K562 (cell line): ENCODE measurements at regions of chr3 and their contacts with region 1.

Region 1: DNA sequence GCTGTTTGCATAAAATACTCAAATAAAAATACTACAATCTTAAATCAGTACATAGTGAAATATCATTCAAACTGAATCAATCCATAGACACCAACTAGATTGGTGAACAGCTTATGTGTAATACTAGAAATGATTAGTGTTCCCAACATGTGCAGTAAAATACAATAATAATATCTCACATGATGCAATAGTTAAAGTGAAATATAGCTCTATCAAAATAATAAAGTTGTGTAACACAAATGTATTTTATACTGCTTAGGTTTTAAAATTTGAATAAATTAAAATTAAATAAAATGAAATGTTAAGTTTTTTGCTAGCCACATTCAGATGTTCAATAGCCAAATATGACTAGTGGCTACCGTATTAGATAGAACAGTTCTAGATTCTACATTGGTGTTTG is 714.1 kb downstream of the ZNF385D start:
- DNase-seq: no peak
- ATAC-seq: no peak
- H3K4me3 ChIP-seq: no peak overlapping the region
- H3K27ac ChIP-seq: no peak overlapping the region
- H3K4me1 ChIP-seq: no peaks in the 10 kb centered on the region
- H3K27me3 ChIP-seq: no peaks in the 10 kb centered on the region
- CTCF ChIP-seq: no peak
- EP300 ChIP-seq: no peak
- POLR2A ChIP-seq: no peak
- RAD21 ChIP-seq: no peak

Region 2: GRCh38 chr3:19632099-19633074 is 1404.5 kb before region 1 on chr3:
- CTCF ChIA-PET with region 1: no interaction called
- POLR2A ChIA-PET with region 1: no interaction called
- in situ Hi-C with region 1: no loop called
- intact Hi-C with region 1: no loop called
- DNase-seq: no peak
- ATAC-seq: no peak
- H3K4me3 ChIP-seq: no peak overlapping the region
- H3K27ac ChIP-seq: no peak overlapping the region
- H3K4me1 ChIP-seq: no peaks in the 10 kb centered on the region
- H3K27me3 ChIP-seq: no peaks in the 10 kb centered on the region
- CTCF ChIP-seq: no peak
- EP300 ChIP-seq: no peak
- POLR2A ChIP-seq: no peak
- RAD21 ChIP-seq: no peak

Region 3: GRCh38 chr3:21020681-21021080 is 16.2 kb before region 1 on chr3:
- CTCF ChIA-PET with region 1: no interaction called
- POLR2A ChIA-PET with region 1: no interaction called
- in situ Hi-C with region 1: no loop called
- intact Hi-C with region 1: no loop called
- DNase-seq: no peak
- ATAC-seq: no peak
- H3K4me3 ChIP-seq: no peak overlapping the region
- H3K27ac ChIP-seq: no peak overlapping the region
- H3K4me1 ChIP-seq: no peaks in the 10 kb centered on the region
- H3K27me3 ChIP-seq: no peaks in the 10 kb centered on the region
- CTCF ChIP-seq: no peak
- EP300 ChIP-seq: no peak
- POLR2A ChIP-seq: no peak
- RAD21 ChIP-seq: no peak

Region 4: DNA sequence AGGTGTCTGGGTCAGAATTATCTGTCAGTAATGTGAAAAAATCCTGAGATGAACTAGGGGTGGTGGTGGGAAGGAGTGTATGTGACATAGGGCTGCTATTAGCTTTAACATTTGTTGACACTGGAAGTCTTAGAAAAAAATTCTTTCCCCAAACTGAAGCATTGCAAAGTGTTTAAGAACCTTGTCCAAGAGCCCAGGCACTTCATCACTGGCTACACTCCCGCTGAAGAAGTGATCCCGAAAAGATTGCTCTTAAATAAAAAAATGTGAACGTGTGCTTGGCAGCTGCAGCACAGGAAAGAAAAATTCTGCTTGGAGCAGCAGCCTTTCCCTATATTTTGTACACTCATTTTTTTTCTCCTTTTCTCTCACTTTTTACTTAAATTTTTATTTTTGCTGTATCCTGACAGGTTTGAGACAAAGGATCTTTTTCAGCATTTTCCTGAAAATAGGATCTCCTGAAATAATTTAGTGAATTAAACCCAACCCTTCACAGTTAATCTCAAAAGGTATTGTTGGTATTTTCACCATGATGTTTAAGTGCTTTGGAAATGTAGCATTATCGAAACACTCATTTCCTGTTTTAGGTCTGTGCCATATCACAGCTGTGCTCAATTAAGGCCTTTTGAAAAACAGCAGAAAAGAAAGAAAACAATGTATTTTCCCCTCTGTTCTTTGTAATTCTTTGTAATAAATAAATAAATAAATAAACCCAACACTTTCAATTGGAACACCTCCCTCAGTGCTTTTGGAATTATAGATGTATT is 236.6 kb after region 1 on chr3:
- CTCF ChIA-PET with region 1: no interaction called
- POLR2A ChIA-PET with region 1: no interaction called
- in situ Hi-C with region 1: no loop called
- intact Hi-C with region 1: no loop called
- DNase-seq: no peak
- ATAC-seq: no peak
- H3K4me3 ChIP-seq: no peak overlapping the region
- H3K27ac ChIP-seq: no peak overlapping the region
- H3K4me1 ChIP-seq: peaks cover 0 to 5% of the 10 kb centered on the region in 2 experiments; a peak in 1 of 5 replicates
- H3K27me3 ChIP-seq: no peaks in the 10 kb centered on the region
- CTCF ChIP-seq: no peak
- EP300 ChIP-seq: no peak
- POLR2A ChIP-seq: no peak
- RAD21 ChIP-seq: no peak

Region 5: GRCh38 chr3:21901484-21901883 is 864.6 kb after region 1 on chr3:
- CTCF ChIA-PET with region 1: no interaction called
- POLR2A ChIA-PET with region 1: no interaction called
- in situ Hi-C with region 1: loop called (anchors 10 kb)
- intact Hi-C with region 1: no loop called
- DNase-seq: no peak
- ATAC-seq: no peak
- H3K4me3 ChIP-seq: no peak overlapping the region
- H3K27ac ChIP-seq: no peak overlapping the region
- H3K4me1 ChIP-seq: no peaks in the 10 kb centered on the region
- H3K27me3 ChIP-seq: no peaks in the 10 kb centered on the region
- CTCF ChIP-seq: no peak
- EP300 ChIP-seq: no peak
- POLR2A ChIP-seq: no peak
- RAD21 ChIP-seq: no peak